Astrocyte of the cerebellum (primary cell): ENCODE measurements at regions of chr9 and their contacts with region 1.

Region 1: DNA sequence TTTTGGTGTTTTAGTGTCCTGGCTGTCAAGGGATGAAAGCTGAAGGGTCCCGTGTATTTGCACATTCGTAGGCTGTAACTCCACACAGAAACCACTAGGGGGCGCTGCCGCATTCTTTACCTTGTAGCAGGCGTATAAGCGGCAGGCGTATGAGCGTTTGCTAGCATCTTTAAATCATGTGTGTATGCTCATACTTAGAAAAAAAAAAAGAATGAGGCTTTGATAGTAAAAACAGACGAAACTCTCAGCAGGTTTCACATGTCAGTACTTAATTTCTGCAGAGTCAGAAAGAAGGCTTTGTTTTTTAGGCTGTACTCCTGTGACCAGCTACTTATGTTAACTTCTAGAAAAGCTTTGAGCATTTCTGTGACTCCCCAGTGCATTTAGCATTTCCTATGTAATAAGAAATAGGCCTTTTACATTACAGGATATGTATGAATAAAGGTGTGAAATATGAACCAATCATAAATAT is 218.8 kb upstream of the ADAMTSL1 start:
- DNase-seq: peak; percentile 88
- H3K4me3 ChIP-seq: no peak overlapping the region
- CTCF ChIP-seq: peak; percentile 84

Region 2: GRCh38 chr9:18208154-18209059 is 46.8 kb before region 1 on chr9:
- in situ Hi-C with region 1: no loop called
- DNase-seq: peak; percentile 16
- H3K4me3 ChIP-seq: no peak overlapping the region
- CTCF ChIP-seq: peak; percentile 63

Region 3: GRCh38 chr9:18473652-18474279 is 218.6 kb after region 1 on chr9 and contains the start of gene ADAMTSL1:
- in situ Hi-C with region 1: loop called (anchors 25 kb)
- DNase-seq: peak; percentile 64
- H3K4me3 ChIP-seq: peak within 1 kb of the TSS; percentile 69
- CTCF ChIP-seq: no peak

Region 4: GRCh38 chr9:19022206-19022605 is 767.0 kb after region 1 on chr9:
- in situ Hi-C with region 1: loop called (anchors 25 kb)
- DNase-seq: no peak
- H3K4me3 ChIP-seq: no peak overlapping the region
- CTCF ChIP-seq: no peak